Activated naive CD4-positive, alpha-beta T cell treated with anti-CD3 and anti-CD28 coated beads for 36 hours (primary cell): ENCODE measurements at regions of chr6 and their contacts with region 1.

Region 1: DNA sequence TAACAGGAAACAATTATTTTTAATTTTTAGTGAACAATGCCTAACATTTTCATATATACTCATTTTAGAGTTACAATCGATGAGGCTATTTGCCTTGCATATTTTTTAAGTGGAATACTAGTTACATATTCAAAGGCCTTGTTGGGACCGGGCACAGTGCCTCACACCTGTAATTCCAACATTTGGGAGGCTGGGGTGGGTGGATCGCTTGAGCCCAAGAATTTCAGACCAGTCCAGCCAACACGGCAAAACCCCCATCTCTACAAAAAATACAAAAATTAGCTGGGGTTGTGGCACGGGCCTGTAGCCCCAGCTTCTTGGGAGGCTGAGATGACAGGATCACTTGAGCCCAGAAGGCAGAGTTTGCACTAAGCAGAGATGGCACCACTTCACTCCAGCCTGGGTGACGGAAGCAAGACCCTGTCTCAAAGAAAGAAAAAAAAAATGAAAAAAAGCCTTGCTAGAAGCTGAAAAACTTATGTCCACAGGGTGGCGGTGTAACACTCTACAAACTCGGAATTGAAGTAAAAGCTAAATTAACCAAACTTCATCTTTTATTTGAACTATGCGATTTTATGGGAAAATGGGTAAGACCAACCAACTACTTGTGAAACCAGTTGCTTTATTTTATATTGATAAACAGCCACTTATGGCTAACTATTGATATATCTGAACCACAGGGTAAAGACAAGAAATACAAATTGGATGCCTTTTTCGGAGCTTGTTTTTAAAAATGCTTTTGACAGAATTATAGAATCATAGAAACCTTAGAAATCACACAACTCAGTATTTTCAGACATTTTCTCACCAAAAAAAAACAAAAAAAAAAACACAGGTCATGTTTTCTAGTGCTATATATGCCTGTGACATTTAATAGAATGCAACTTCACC is 24.1 kb upstream of the ROS1 start:
- DNase-seq: peak; percentile 80
- H3K4me3 Mint-ChIP-seq: no peak overlapping the region
- H3K27ac Mint-ChIP-seq: no peak overlapping the region
- H3K4me1 Mint-ChIP-seq: no peaks in the 10 kb centered on the region
- H3K27me3 Mint-ChIP-seq: peaks cover 13% of the 10 kb centered on the region

Region 2: DNA sequence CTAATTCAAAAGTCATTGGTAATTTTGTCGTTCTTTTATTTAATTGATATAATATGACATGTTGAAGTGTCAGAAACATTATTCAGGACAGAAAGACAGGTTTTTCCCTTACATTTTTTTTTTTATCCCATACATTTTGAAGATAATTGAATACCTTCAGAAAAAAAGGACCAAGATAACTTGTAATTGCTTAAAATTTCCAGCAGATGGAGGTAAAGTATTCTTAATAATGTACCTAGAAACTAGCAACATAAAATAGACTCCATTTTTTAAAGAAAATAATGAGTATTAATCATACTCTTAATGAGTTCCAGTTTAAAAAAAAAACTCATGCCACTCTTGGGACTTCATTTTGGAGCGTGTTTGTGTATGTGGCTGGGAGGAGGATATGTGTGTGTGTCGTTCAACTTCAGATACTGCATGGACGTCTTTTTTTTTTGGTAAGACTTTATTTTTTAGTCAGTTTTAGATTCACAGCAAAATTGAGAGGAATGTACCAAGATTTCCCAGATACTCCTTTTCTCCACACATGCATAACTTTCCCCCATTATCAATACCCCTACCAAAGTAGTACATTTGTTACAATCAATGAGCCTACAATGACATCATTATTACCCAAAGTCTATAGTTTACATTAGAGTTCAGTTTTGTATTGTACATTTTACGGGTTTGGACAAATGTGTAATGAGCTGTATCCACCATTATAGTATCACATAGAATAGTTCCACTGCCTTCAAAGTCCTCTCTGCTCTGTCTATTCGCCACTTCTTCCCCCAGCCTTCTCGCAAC is 103.5 kb before region 1 on chr6:
- CTCF ChIA-PET with region 1: interaction called, 4 read pairs
- intact Hi-C with region 1: loop called (anchors 2 kb)
- DNase-seq: no peak
- H3K4me3 Mint-ChIP-seq: no peak overlapping the region
- H3K27ac Mint-ChIP-seq: no peak overlapping the region
- H3K4me1 Mint-ChIP-seq: no peaks in the 10 kb centered on the region
- H3K27me3 Mint-ChIP-seq: peaks cover 3% of the 10 kb centered on the region

Region 3: DNA sequence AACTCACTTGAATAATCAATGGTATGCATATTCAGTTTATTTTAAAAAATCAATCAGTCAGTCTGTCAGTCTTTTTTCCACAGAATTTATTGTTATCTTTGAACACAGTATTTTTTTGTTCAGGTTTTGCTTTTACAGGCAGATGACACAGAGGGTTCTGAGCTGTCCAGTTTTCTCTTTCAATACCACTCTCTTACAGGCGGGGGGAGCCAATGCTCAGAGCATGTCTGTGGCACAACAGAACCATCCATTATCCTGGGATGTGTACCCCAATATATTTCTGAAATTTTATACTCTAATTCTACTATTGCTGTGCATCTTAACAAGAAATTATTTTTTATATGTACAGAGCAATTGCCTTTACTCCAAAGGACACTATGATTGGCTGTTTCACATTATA is 45.2 kb before region 1 on chr6:
- CTCF ChIA-PET with region 1: interaction called, 13 read pairs
- intact Hi-C with region 1: no loop called
- DNase-seq: no peak
- H3K4me3 Mint-ChIP-seq: no peak overlapping the region
- H3K27ac Mint-ChIP-seq: no peak overlapping the region
- H3K4me1 Mint-ChIP-seq: no peaks in the 10 kb centered on the region
- H3K27me3 Mint-ChIP-seq: peaks cover 5% of the 10 kb centered on the region

Region 4: GRCh38 chr6:117531346-117531745 is 81.6 kb after region 1 on chr6:
- CTCF ChIA-PET with region 1: interaction called, 12 read pairs
- intact Hi-C with region 1: no loop called
- DNase-seq: no peak
- H3K4me3 Mint-ChIP-seq: no peak overlapping the region
- H3K27ac Mint-ChIP-seq: no peak overlapping the region
- H3K4me1 Mint-ChIP-seq: no peaks in the 10 kb centered on the region
- H3K27me3 Mint-ChIP-seq: no peaks in the 10 kb centered on the region

Region 5: GRCh38 chr6:117547688-117548621 is 98.2 kb after region 1 on chr6:
- CTCF ChIA-PET with region 1: interaction called, 16 read pairs
- intact Hi-C with region 1: no loop called
- DNase-seq: peak; percentile 52
- H3K4me3 Mint-ChIP-seq: peak overlapping the region; percentile 67
- H3K27ac Mint-ChIP-seq: no peak overlapping the region
- H3K4me1 Mint-ChIP-seq: peaks cover 37% of the 10 kb centered on the region
- H3K27me3 Mint-ChIP-seq: peaks cover 6% of the 10 kb centered on the region

Region 6: DNA sequence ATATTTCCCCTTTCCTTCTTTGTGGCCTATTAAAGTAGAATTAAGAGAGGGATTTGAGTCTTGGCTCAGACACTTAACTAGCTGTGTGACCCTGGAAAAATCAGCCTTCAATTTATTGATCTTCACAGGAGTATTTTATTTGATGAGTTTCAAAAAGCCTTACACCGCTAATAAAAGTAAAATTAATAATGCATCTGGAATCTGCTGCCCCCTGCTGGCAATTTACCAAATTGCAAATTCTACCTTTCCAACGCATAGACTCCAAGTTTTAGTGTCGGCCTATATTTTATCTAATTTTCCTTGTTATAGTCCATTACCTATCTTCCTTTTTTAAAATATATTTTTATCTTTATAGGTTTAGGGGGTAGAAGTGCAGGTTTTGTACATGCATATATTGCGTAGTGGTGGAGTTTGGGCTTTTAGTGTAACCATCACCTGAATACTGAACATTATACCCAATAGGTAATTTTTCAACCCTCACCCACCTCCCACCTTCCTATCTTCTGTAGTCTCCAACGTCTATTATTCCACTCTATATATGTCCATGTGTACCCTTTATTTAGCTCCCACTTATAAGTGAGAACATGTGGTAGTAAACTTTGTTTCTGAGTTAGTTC is 106.2 kb after region 1 on chr6:
- CTCF ChIA-PET with region 1: interaction called, 83 read pairs
- intact Hi-C with region 1: loop called (anchors 1 kb)
- DNase-seq: peak; percentile 78
- H3K4me3 Mint-ChIP-seq: no peak overlapping the region
- H3K27ac Mint-ChIP-seq: no peak overlapping the region
- H3K4me1 Mint-ChIP-seq: peaks cover under 1% of the 10 kb centered on the region
- H3K27me3 Mint-ChIP-seq: peaks cover 2% of the 10 kb centered on the region